ENCODE measurements at regions of chr11 and their contacts with region 1.

Region 1: DNA sequence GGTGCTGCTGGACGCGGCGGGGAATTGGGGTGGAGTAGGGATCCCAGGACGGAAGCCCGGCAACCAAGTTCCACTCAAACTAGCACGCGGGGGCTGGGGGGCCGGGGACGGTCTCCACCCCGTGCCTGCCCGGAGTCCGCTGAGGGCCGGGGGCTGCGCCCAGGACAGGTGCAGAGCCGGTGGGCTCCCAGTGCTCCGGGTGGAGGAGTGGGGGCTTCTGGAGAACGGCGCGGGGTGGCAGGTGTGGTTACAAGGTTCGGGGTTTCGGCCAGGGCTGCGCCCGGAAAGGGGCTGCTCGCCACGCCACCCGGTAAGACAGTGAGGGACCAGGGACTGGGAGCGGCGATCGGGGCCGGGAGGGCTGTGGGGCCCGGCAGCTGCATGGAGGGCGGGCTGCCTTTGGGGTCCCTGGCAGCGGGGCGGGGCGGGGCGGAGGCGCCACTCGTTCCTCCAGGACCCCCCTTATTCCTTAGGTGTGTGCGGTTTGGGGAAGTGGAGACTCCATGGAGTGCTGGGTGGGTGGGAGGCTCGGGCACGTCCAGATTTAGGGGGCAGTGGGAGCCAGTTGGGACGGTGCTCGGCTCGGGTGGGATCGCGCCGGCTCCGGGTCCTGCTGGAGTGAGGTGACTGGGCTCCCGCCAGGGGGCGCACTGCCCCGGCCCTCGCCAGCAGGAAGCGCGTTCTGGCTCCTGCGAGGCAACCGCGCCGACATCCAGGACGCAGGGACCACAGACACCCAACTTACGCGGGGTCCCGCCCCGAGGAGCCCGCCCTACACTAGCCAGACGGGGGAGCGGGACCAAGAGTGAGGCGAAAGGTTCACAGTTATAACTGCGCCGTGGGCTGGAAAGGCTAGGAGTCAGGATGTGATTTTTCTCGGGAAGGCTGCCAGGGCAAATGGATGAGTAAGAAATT is 868 bp downstream of the TSPAN18 start:
- DNase-seq: peak; percentile 93
- H3K4me3 ChIP-seq: peak overlapping the region; percentile 77
- H3K27ac ChIP-seq: peak overlapping the region; percentile 44
- H3K4me1 ChIP-seq: peaks cover 37% of the 10 kb centered on the region
- H3K27me3 ChIP-seq: no peaks in the 10 kb centered on the region
- CTCF ChIP-seq: peak; percentile 100

Region 2: GRCh38 chr11:44743959-44744557 is 16.4 kb after region 1 on chr11:
- CTCF ChIA-PET with region 1: interaction called, 10 read pairs
- POLR2A ChIA-PET with region 1: no interaction called
- intact Hi-C with region 1: no loop called
- DNase-seq: no peak
- H3K4me3 ChIP-seq: no peak overlapping the region
- H3K27ac ChIP-seq: no peak overlapping the region
- H3K4me1 ChIP-seq: no peaks in the 10 kb centered on the region
- H3K27me3 ChIP-seq: no peaks in the 10 kb centered on the region
- CTCF ChIP-seq: no peak

Region 3: DNA sequence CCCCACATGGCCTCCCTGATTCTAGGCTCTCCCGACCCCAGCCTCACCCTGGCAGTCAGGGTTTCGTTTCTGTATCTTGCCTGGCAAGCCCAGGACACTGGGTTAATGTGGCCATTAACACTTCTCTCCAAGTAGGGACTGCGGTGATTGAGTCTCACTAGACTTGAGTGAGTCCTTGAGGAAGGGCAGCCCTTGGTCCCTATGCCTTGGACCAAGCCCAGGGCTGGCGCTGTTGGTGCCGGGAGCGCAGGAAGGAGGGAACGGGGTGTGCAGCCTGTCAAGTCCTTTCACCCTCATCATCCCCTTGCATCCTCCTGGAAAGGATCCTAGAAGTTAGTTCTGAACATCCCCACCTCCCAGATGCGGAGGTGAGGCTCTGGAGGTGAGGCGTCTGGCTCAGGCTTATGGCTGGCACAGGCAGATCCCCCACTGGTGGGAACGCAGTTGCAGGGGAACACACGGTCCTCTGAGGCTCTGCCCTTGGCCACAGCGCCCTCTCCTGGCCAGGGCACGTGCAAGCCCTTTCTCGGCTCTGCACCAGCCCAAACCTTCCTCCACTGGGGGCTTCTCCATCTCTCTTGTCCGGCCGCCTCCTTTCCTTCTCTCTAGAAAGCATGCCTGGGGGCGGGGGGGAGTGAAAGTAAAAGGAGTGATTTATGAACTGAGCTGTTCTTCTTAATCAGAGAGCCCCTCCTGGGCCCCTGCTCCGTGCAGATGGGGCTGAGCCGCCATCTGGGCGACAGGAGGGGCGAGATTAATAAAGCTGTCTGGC is 166.4 kb after region 1 on chr11:
- CTCF ChIA-PET with region 1: interaction called, 4 read pairs
- POLR2A ChIA-PET with region 1: no interaction called
- intact Hi-C with region 1: loop called (anchors 1 kb)
- DNase-seq: peak; percentile 93
- H3K4me3 ChIP-seq: no peak overlapping the region
- H3K27ac ChIP-seq: no peak overlapping the region
- H3K4me1 ChIP-seq: peaks cover 12% of the 10 kb centered on the region
- H3K27me3 ChIP-seq: no peaks in the 10 kb centered on the region
- CTCF ChIP-seq: peak; percentile 100

Measured in A673 (cell line).